BJ (cell line): ENCODE measurements at regions of chr11 and their contacts with region 1.

Region 1: GRCh38 chr11:131910523-131911387 is 540.3 kb downstream of the NTM start:
- DNase-seq: no peak
- H3K4me3 ChIP-seq: peak overlapping the region; percentile 76
- H3K27me3 ChIP-seq: no peaks in the 10 kb centered on the region
- CTCF ChIP-seq: no peak

Region 2: GRCh38 chr11:131449036-131450019 is 461.4 kb before region 1 on chr11:
- CTCF ChIA-PET with region 1: no interaction called
- POLR2A ChIA-PET with region 1: no interaction called
- DNase-seq: no peak
- H3K4me3 ChIP-seq: no peak overlapping the region
- H3K27me3 ChIP-seq: peaks cover 2% of the 10 kb centered on the region; the same call in 1 of the 2 replicates
- CTCF ChIP-seq: no peak

Region 3: DNA sequence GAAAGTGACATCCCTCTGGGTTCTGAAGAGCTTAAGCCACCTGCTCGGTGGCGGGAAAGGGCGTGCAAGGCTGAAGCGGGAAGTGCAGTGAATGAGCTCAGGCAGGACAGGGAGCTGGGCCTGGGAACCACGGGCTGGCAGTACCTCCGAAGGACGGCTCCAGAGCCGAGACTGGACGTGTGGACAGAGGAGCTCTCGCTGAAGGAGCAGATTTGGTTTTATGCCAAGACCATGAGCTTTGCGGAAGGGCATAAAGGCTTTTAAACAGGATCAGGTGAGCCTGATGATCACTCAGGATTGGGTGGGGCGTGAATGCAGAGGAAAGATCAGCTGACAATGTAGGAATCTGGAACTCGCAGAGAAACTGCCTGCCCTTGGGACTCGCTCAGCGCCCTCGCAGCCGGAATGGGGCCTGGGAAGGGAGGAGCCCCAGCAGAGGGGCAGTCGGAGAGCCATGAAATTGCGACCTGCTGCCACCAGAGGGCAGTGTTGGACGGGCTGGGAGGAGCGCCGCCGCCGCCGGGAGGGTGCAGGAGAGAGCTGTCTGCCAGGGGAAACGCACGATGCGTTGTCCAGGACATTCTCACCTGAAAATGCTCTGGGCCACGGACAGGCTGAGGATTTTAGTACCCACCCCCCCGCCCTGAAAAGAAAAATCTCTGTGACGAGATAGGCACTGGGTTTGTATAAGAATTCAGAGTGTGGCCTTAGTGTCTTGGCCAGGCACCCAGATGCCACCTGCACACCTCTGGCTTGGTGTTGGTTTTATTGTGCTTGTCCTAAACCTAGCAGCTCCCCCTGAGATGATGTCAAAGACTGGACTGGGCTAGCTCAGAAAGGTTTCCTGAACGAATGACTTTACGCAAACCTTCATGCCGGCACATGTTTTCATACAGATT is 216.0 kb before region 1 on chr11:
- CTCF ChIA-PET with region 1: interaction called, 39 read pairs
- POLR2A ChIA-PET with region 1: no interaction called
- DNase-seq: peak; percentile 18
- H3K4me3 ChIP-seq: no peak overlapping the region
- H3K27me3 ChIP-seq: no peaks in the 10 kb centered on the region
- CTCF ChIP-seq: peak; percentile 98

Region 4: GRCh38 chr11:131889146-131889577 is 21.6 kb before region 1 on chr11:
- CTCF ChIA-PET with region 1: interaction called, 15 read pairs
- POLR2A ChIA-PET with region 1: no interaction called
- DNase-seq: peak; percentile 76
- H3K4me3 ChIP-seq: no peak overlapping the region
- H3K27me3 ChIP-seq: no peaks in the 10 kb centered on the region
- CTCF ChIP-seq: no peak

Region 5: GRCh38 chr11:131924457-131925201 is 13.9 kb after region 1 on chr11:
- CTCF ChIA-PET with region 1: interaction called, 37 read pairs
- POLR2A ChIA-PET with region 1: no interaction called
- DNase-seq: no peak
- H3K4me3 ChIP-seq: no peak overlapping the region
- H3K27me3 ChIP-seq: no peaks in the 10 kb centered on the region
- CTCF ChIP-seq: no peak

Region 6: DNA sequence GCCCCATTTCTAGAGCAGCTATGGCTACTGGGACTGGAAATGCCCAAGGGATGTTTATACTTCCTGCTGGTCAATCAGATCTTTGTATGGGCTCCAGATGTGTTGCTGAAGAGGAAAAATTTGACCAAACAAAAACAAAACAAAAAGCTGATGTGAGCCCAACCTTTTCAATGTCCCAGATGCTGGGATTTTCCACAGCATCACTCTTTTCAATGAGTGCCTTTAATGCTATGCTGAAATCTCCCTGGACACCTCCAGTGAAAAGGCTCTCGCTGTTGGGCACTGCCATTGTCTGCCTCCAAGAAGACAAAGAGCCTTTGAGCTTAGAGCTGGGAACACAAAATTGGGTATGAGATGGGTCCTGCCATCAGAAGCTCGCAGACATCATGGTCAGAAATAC is 131.5 kb after region 1 on chr11:
- CTCF ChIA-PET with region 1: no interaction called
- POLR2A ChIA-PET with region 1: no interaction called
- DNase-seq: no peak
- H3K4me3 ChIP-seq: no peak overlapping the region
- H3K27me3 ChIP-seq: no peaks in the 10 kb centered on the region
- CTCF ChIP-seq: no peak

Region 7: GRCh38 chr11:132126973-132127899 is 216.5 kb after region 1 on chr11:
- CTCF ChIA-PET with region 1: interaction called, 103 read pairs
- POLR2A ChIA-PET with region 1: no interaction called
- DNase-seq: peak; percentile 26
- H3K4me3 ChIP-seq: peak overlapping the region; percentile 19
- H3K27me3 ChIP-seq: no peaks in the 10 kb centered on the region
- CTCF ChIP-seq: peak; percentile 79